ENCODE measurements at regions of chr1 and their contacts with region 1.

Region 1: GRCh38 chr1:201999625-202000238 is 10.7 kb upstream of the ELF3 start:
- DNase-seq: peak; percentile 44
- ATAC-seq: peak; percentile 68
- H3K4me3 Mint-ChIP-seq: no peak overlapping the region
- H3K27ac Mint-ChIP-seq: no peak overlapping the region
- H3K4me1 Mint-ChIP-seq: no peaks in the 10 kb centered on the region
- H3K27me3 Mint-ChIP-seq: no peaks in the 10 kb centered on the region

Region 2: GRCh38 chr1:201945157-201945556 is 54.6 kb before region 1 on chr1:
- CTCF ChIA-PET with region 1: no interaction called
- DNase-seq: no peak
- ATAC-seq: no peak
- H3K4me3 Mint-ChIP-seq: no peak overlapping the region
- H3K27ac Mint-ChIP-seq: no peak overlapping the region
- H3K4me1 Mint-ChIP-seq: peaks cover 13% of the 10 kb centered on the region
- H3K27me3 Mint-ChIP-seq: peaks cover 53% of the 10 kb centered on the region

Region 3: DNA sequence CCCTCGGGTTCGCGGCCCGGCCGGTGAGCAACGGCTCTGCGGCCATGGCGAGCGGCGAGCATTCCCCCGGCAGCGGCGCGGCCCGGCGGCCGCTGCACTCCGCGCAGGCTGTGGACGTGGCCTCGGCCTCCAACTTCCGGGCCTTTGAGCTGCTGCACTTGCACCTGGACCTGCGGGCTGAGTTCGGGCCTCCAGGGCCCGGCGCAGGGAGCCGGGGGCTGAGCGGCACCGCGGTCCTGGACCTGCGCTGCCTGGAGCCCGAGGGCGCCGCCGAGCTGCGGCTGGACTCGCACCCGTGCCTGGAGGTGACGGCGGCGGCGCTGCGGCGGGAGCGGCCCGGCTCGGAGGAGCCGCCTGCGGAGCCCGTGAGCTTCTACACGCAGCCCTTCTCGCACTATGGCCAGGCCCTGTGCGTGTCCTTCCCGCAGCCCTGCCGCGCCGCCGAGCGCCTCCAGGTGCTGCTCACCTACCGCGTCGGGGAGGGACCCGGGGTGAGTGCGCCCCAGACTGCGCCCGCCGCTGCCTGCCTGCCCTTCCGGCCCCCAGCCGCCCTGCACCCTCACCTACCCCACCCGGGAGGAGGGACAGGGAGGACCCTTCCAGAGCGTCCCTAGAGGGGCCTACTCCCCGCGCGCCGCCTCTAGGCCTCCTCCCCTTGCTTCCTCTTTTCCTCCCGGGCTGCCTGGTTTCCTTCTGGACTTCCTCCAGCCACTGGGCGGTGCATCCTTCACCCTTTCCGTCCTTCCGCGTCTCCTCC is 16.9 kb before region 1 on chr1 and contains the start of gene RNPEP:
- CTCF ChIA-PET with region 1: interaction called, 48 read pairs
- DNase-seq: peak; percentile 68
- ATAC-seq: peak; percentile 86
- H3K4me3 Mint-ChIP-seq: peak within 1 kb of the TSS; percentile 94
- H3K27ac Mint-ChIP-seq: peak within 1 kb of the TSS; percentile 88
- H3K4me1 Mint-ChIP-seq: peaks cover 19% of the 10 kb centered on the region
- H3K27me3 Mint-ChIP-seq: peaks cover 9% of the 10 kb centered on the region
- total RNA-seq, gene RNPEP: 38.3 to 40.4 TPM

Region 4: DNA sequence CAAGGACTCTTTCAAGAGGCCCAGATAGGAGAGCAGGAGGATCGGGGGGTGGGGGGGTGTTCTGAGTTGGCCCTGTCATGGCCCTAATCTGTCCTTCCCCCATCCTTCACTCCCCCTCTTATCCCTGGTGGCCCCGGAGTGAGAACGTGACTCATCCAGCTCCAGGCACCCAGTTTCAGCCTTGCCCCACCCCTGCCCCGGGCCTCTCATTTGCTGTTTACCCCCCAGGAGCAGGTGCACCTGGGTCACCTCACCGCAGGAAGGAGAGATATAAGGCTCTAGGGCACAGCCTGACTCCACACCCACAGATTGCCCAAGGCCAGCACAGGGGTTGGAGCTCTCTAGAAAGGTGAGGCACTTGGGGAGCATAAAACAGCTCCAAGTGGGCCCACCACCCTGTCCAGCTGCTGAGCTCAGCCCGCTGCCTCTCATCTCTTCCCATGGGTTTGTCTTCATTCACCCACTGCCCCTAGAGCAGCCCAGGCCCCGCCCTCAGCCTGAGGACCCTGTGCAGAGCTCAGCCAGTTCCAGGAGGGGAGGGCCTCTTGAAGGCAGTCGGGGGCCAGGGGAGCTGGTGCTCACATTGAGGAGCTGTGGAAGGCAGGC is 106.7 kb after region 1 on chr1:
- CTCF ChIA-PET with region 1: no interaction called
- DNase-seq: no peak
- ATAC-seq: no peak
- H3K4me3 Mint-ChIP-seq: no peak overlapping the region
- H3K27ac Mint-ChIP-seq: no peak overlapping the region
- H3K4me1 Mint-ChIP-seq: no peaks in the 10 kb centered on the region
- H3K27me3 Mint-ChIP-seq: no peaks in the 10 kb centered on the region

Region 5: DNA sequence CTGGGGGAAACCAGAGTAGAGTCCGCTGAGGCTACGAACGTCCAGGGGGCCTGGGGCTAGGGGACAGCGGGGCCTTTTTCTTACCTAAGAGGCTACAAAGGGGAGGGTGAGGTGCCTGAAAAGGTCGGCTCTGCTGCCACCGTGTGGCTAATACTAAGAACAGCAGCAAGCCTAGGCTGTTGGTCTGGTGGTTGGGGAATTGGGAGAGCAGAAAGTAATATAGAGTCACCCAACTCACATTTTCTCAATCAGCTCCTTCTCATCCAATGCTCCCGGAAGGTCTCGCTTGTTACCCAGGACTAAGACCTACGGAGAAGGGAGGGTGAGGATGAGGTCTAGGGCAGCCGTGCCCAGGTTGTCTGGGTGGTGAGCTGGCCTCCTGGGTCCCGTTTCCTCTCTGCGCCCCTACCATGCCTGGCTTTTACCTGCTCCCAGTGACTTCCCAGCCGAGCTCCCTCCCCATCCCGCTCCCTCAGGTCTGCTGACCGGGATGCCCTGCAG is 135.5 kb after region 1 on chr1:
- CTCF ChIA-PET with region 1: interaction called, 15 read pairs
- DNase-seq: peak; percentile 64
- ATAC-seq: peak; percentile 87
- H3K4me3 Mint-ChIP-seq: no peak overlapping the region
- H3K27ac Mint-ChIP-seq: no peak overlapping the region
- H3K4me1 Mint-ChIP-seq: peaks cover 4% of the 10 kb centered on the region
- H3K27me3 Mint-ChIP-seq: no peaks in the 10 kb centered on the region

Region 6: DNA sequence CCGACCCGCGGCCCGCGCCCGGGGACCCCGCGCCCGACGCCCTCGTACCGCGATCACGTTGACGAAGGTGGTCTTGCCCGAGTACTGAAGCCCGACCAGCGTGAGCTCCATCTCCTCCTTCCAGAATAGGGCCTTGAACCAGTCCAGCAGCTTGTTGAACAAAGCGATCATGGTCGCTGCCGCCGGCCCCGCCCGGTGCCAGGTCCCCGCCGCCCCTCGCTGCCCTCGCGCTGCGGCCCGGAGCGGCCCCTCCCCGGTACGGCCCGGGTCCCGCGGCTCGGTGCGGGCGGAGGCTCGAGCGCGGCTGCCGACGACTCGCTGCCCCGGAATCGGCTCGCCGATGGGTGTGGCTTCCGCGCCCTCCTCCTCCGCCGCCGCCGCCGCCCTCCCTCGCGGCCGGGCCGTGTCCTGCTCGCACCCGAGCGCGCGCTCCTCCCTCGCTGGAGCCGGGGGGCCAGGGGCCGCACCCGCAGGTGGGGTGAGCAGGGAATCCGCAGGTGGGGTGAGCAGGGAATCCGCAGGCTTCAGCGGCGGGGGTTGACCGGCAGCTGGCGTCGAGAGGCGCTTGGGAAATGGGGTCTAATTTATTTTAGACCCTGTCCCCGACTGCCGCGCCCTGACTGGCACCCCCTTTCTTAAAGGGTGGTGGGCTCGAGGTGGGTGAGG is 144.8 kb after region 1 on chr1 and contains the start of gene ARL8A:
- CTCF ChIA-PET with region 1: interaction called, 11 read pairs
- DNase-seq: peak; percentile 79
- ATAC-seq: peak; percentile 84
- H3K4me3 Mint-ChIP-seq: peak within 1 kb of the TSS; percentile 85
- H3K27ac Mint-ChIP-seq: peak within 1 kb of the TSS; percentile 90
- H3K4me1 Mint-ChIP-seq: peaks cover 41% of the 10 kb centered on the region
- H3K27me3 Mint-ChIP-seq: no peaks in the 10 kb centered on the region
- total RNA-seq, gene ARL8A: 50.0 to 68.9 TPM

Region 7: GRCh38 chr1:202452493-202452892 is 452.8 kb after region 1 on chr1:
- CTCF ChIA-PET with region 1: no interaction called
- DNase-seq: no peak
- ATAC-seq: no peak
- H3K4me3 Mint-ChIP-seq: no peak overlapping the region
- H3K27ac Mint-ChIP-seq: no peak overlapping the region
- H3K4me1 Mint-ChIP-seq: peaks cover 9% of the 10 kb centered on the region
- H3K27me3 Mint-ChIP-seq: no peaks in the 10 kb centered on the region